CD14-positive monocyte (primary cell): ENCODE measurements at regions of chr11 and their contacts with region 1.

Region 1: DNA sequence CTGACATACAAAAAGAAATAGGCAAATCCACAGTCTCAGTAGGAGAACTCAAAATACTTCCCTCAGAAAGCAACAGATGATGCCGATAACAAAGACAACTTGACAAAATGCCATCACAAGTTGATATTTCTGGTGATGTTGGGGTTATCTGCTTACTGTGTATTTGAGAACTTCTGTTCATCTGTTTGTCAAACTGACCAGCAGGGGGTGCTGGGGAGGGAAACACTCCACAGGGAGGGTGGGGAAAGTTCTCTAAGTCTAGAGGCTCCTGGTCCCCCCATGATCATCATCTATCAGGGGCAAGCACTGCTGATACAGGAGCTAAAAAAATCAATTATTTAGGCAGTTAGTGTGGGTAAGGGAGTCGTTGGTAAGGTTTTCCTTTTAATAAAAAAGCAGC is 19.2 kb downstream of the GLYATL1 start:
- DNase-seq: peak; percentile 35 to 57 (median 55)
- H3K4me3 ChIP-seq: no peak overlapping the region
- H3K4me3 Mint-ChIP-seq: no peak overlapping the region
- H3K27ac ChIP-seq: no peak overlapping the region
- H3K27ac Mint-ChIP-seq: no peak overlapping the region
- H3K4me1 ChIP-seq: no peaks in the 10 kb centered on the region
- H3K4me1 Mint-ChIP-seq: no peaks in the 10 kb centered on the region
- H3K27me3 ChIP-seq: no peaks in the 10 kb centered on the region
- H3K27me3 Mint-ChIP-seq: no peaks in the 10 kb centered on the region
- CTCF ChIP-seq: peak; percentile 75

Region 2: GRCh38 chr11:59053387-59053786 is 94.9 kb after region 1 on chr11:
- intact Hi-C with region 1: loop called (anchors 5 kb)
- DNase-seq: peak; percentile 45 to 65 (median 61)
- H3K4me3 ChIP-seq: no peak overlapping the region
- H3K4me3 Mint-ChIP-seq: no peak overlapping the region
- H3K27ac ChIP-seq: no peak overlapping the region
- H3K27ac Mint-ChIP-seq: no peak overlapping the region
- H3K4me1 ChIP-seq: peaks cover 0 to 3% of the 10 kb centered on the region in 2 donors
- H3K4me1 Mint-ChIP-seq: peaks cover 6% of the 10 kb centered on the region
- H3K27me3 ChIP-seq: no peaks in the 10 kb centered on the region
- H3K27me3 Mint-ChIP-seq: peaks cover 1 to 5% (median 2%) of the 10 kb centered on the region in 3 donors
- CTCF ChIP-seq: peak; percentile 85

Region 3: DNA sequence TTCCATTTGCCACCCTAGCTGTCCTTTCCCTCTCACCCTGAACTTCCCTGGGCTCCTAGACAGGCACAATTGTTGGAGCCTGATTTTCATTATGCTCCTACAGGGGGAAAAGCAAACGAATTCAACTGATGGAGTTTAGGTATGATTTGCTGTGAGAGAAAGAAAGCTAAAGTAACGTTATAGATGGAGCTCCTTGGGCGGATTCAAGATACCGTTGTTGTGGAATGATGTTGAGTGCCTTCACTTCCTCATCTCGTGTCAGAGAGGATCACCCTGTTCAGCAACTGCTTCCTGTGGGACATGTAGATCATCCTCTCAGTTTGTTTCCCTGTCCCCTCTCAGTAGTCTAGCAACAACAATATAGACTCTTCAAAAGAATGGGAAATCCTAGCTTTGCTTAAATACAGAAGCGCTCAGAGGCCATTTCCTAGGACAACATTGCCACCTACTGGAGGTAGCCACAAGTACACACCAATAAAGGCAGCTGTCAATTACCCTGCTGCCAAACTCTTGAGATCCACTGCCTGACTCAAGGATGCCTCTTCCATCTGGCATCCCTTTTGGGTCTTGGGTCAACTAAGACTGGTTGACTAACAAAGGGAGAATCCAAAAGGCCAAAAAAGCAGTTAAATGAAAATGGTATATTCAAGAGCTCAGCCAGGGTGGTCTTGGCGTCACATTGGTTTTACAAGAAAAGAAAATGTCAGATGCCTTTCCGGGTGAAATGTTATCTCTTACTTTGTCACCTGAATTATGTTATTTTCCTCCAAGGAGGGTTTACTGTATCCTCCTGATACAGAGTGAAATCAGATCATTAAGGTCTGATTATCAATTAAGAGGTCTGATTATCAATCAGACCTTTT is 199.9 kb after region 1 on chr11:
- intact Hi-C with region 1: loop called in 1 of 2 experiments (anchors 10 kb)
- DNase-seq: peak; percentile 72 to 86 (median 81)
- H3K4me3 ChIP-seq: peak overlapping the region in 2 of 3 experiments; percentile 57 to 58
- H3K4me3 Mint-ChIP-seq: peak overlapping the region; percentile 66 to 80
- H3K27ac ChIP-seq: peak overlapping the region in 1 of 2 donors; percentile 51
- H3K27ac Mint-ChIP-seq: peak overlapping the region; percentile 55 to 87 (median 80)
- H3K4me1 ChIP-seq: peaks cover 14 to 17% of the 10 kb centered on the region in 2 donors
- H3K4me1 Mint-ChIP-seq: peaks cover 17% of the 10 kb centered on the region
- H3K27me3 ChIP-seq: no peaks in the 10 kb centered on the region
- H3K27me3 Mint-ChIP-seq: peaks cover 0 to 2% (median 1%) of the 10 kb centered on the region in 3 donors
- CTCF ChIP-seq: peak; percentile 91